H1 (cell line): ENCODE measurements at regions of chr1 and their contacts with region 1.

Region 1: GRCh38 chr1:201085916-201086735 is 26.1 kb downstream of the CACNA1S start:
- DNase-seq: peak; percentile 25 to 81
- H3K4me3 ChIP-seq: no peak overlapping the region
- H3K27ac ChIP-seq: no peak overlapping the region
- H3K4me1 ChIP-seq: no peaks in the 10 kb centered on the region
- H3K27me3 ChIP-seq: no peaks in the 10 kb centered on the region
- CTCF ChIP-seq: peak; percentile 71 to 97 (median 86)
- EP300 ChIP-seq: no peak
- POLR2A ChIP-seq: no peak
- RAD21 ChIP-seq: peak; percentile 88 to 94

Region 2: DNA sequence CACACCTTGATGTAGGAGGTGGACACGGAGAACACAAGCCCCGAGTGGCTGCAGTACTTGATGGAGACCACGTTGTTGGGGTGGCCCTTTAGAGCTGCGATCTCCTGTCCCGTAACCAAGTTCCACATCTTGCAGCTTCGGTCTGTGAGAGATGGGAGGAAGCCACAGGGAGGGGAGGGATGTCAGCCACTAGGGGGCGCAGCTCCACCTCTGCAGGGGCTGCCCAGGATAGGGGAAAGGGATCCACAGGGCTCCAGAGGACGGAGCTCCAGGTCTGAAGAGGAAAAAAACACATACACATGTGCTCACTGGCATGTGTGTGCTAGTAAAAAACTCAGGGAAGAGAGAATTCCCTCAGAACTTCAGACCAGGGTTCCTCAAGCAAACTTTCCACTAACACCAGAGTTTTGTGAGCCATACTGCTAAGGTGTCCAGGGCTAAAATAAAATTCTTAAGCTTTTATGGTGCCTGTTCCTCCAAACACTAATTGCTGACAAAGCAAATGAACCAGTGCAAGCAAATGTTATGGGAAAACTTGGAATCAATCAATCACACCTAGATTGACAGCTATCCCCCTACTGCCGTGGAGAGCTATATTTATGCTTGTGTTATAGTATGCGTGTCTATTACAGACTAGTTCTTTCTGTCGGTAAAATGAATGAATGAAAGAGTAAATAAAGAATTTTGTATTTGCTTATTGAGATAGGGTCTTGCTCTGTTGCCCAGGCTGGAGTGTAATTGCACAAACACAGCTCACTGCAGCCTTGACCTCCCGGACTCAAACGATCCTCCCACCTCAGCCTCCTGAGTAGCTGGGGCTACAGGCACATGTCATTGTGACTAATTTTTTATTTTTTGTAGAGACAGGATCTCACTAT is 106.3 kb before region 1 on chr1:
- CTCF ChIA-PET with region 1: interaction called, 11 read pairs
- POLR2A ChIA-PET with region 1: no interaction called
- DNase-seq: peak; percentile 47 to 95
- H3K4me3 ChIP-seq: no peak overlapping the region
- H3K27ac ChIP-seq: no peak overlapping the region
- H3K4me1 ChIP-seq: no peaks in the 10 kb centered on the region
- H3K27me3 ChIP-seq: no peaks in the 10 kb centered on the region
- CTCF ChIP-seq: peak; percentile 90 to 98 (median 97)
- EP300 ChIP-seq: peak in 1 of 2 experiments; percentile 10; a peak in 1 of 3 replicates
- POLR2A ChIP-seq: no peak
- RAD21 ChIP-seq: peak; percentile 87 to 89

Region 3: DNA sequence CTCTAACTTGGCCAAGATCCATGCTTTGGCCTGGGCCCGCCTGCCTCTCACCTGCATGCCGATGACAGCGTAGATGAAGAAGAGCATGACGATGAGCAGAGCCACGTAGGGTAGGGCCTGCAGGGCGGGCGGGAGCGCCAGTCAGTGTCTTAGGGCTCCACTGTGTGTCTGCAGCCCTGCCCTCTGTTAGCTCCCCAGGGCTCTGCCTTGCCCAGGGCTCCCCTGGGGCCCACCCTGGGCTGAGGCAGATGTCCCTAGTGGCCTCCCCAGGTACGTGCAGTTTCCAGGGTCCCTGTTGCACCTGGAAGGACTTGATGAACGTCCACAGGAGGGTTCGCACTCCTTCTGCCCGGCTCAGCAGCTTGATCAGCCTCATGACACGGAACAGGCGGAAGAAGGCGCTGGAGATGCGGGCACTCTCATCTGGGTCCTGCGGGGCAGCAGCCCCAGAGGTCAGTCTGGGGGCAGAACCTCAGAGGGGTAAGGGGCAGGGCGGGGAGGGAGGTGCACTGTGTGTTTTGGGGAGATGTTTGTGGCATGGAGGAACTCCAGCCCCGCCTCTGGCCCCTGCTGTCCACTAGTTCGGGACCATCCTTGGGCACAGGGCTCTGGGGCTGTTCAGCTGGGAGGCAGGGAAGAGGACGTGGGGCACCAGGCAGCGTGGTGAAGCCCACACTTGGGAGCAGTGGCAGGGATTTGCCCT is 32.8 kb before region 1 on chr1:
- CTCF ChIA-PET with region 1: interaction called, 17 read pairs
- POLR2A ChIA-PET with region 1: no interaction called
- DNase-seq: no peak
- H3K4me3 ChIP-seq: no peak overlapping the region
- H3K27ac ChIP-seq: no peak overlapping the region
- H3K4me1 ChIP-seq: no peaks in the 10 kb centered on the region; a peak in 1 of 7 replicates
- H3K27me3 ChIP-seq: no peaks in the 10 kb centered on the region
- CTCF ChIP-seq: peak; percentile 22 to 53 (median 42); a peak in 3 of 4 replicates
- EP300 ChIP-seq: no peak
- POLR2A ChIP-seq: no peak
- RAD21 ChIP-seq: peak in 1 of 2 experiments; percentile 17; a peak in 1 of 4 replicates

Region 4: DNA sequence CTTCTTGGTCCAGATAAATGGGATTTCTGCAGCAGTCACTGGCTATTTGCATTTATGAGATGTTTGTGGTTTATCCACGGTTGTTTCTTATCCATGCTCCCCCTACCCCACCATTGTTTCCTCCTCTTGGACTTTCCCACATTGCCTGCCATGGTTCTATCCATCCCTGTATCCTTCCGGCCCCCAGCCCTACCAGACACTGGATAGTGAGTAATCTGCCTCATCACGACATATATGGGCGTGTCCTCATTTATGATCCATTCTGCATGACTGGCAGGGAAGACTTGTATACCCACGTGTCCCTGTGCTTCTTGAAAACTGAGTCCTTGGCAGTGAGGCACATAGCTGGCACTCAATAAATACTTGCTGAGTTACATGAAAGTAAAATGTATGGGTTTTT is 14.0 kb before region 1 on chr1:
- CTCF ChIA-PET with region 1: interaction called, 97 read pairs
- POLR2A ChIA-PET with region 1: interaction called, 3 read pairs
- DNase-seq: no peak
- H3K4me3 ChIP-seq: no peak overlapping the region
- H3K27ac ChIP-seq: no peak overlapping the region
- H3K4me1 ChIP-seq: peaks cover 0 to 4% (median 0%) of the 10 kb centered on the region in 4 experiments; a peak in 1 of 7 replicates
- H3K27me3 ChIP-seq: no peaks in the 10 kb centered on the region; a peak in 1 of 7 replicates
- CTCF ChIP-seq: no peak
- EP300 ChIP-seq: no peak
- POLR2A ChIP-seq: no peak
- RAD21 ChIP-seq: no peak

Region 5: GRCh38 chr1:201108614-201109013 is 22.5 kb after region 1 on chr1:
- CTCF ChIA-PET with region 1: interaction called, 343 read pairs
- POLR2A ChIA-PET with region 1: interaction called, 15 read pairs
- DNase-seq: no peak
- H3K4me3 ChIP-seq: no peak overlapping the region
- H3K27ac ChIP-seq: no peak overlapping the region
- H3K4me1 ChIP-seq: peaks cover 0 to 7% (median 3%) of the 10 kb centered on the region in 4 experiments; a peak in 3 of 7 replicates
- H3K27me3 ChIP-seq: peaks cover 0 to 3% (median 2%) of the 10 kb centered on the region in 4 experiments; a peak in 3 of 7 replicates
- CTCF ChIP-seq: no peak
- EP300 ChIP-seq: no peak
- POLR2A ChIP-seq: no peak
- RAD21 ChIP-seq: no peak

Region 6: GRCh38 chr1:201114236-201115131 is 28.4 kb after region 1 on chr1:
- CTCF ChIA-PET with region 1: interaction called, 343 read pairs
- POLR2A ChIA-PET with region 1: interaction called, 15 read pairs
- DNase-seq: peak; percentile 90 to 91
- H3K4me3 ChIP-seq: peak overlapping the region; percentile 30 to 72 (median 50)
- H3K27ac ChIP-seq: no peak overlapping the region
- H3K4me1 ChIP-seq: peaks cover 0 to 5% (median under 1%) of the 10 kb centered on the region in 4 experiments; a peak in 1 of 7 replicates
- H3K27me3 ChIP-seq: peaks cover 9 to 27% (median 21%) of the 10 kb centered on the region in 4 experiments
- CTCF ChIP-seq: peak; percentile 86 to 96 (median 95)
- EP300 ChIP-seq: no peak
- POLR2A ChIP-seq: peak in 1 of 2 experiments; percentile 77; a peak in 2 of 3 replicates
- RAD21 ChIP-seq: peak; percentile 95 to 99